ENCODE measurements at regions of chr5 and their contacts with region 1.

Region 1: DNA sequence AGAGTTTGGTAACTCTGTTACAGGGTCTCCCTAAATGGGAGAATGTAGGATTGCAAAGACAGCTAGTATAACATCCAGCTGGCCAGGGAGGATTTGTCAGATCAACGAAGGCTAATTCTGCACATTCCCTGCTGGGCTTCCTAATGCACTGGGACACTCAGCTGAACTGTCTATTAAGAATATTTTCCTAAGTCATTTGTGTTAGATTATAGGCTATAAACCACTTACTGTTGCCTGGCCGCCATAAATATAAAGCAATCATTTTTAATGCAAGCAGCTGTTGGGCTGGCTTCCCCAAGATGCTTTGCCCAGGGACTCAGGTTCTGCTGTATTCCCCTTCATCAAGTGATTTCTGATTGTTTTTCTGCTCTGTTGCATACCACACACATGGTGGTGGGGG is 35.3 kb upstream of the SLIT3 start:
- DNase-seq: no peak
- H3K4me3 ChIP-seq: no peak overlapping the region
- H3K27ac ChIP-seq: no peak overlapping the region
- H3K4me1 ChIP-seq: no peaks in the 10 kb centered on the region
- H3K27me3 ChIP-seq: no peaks in the 10 kb centered on the region
- CTCF ChIP-seq: no peak
- POLR2A ChIP-seq: no peak

Region 2: DNA sequence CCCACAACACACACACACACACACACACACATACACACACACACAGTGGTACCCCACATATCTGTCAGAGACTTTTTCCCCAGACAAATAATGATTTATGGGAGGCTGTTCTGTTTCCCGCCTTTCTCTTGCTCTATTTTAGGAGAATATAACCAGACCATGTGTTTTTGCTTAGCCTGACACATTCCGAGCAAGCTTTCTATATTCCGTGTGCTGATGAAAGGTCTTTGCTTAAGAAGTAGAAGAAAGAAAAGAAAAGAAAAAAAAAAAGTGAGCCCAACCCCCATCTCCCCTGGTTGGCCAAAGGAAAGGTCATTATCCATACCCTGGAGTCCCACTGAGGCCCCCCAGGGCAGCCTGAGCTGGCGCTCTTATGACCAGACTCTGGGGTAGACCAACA is 373.9 kb before region 1 on chr5:
- intact Hi-C with region 1: no loop called
- DNase-seq: no peak
- H3K4me3 ChIP-seq: no peak overlapping the region
- H3K27ac ChIP-seq: peak overlapping the region in 1 of 2 donors; percentile 55
- H3K4me1 ChIP-seq: no peaks in the 10 kb centered on the region
- H3K27me3 ChIP-seq: no peaks in the 10 kb centered on the region
- CTCF ChIP-seq: no peak
- POLR2A ChIP-seq: no peak

Region 3: GRCh38 chr5:169280286-169280685 is 56.0 kb before region 1 on chr5:
- intact Hi-C with region 1: no loop called
- DNase-seq: no peak
- H3K4me3 ChIP-seq: no peak overlapping the region
- H3K27ac ChIP-seq: no peak overlapping the region
- H3K4me1 ChIP-seq: no peaks in the 10 kb centered on the region
- H3K27me3 ChIP-seq: no peaks in the 10 kb centered on the region
- CTCF ChIP-seq: no peak
- POLR2A ChIP-seq: no peak

Region 4: GRCh38 chr5:169367861-169368260 is 31.6 kb after region 1 on chr5:
- intact Hi-C with region 1: no loop called
- DNase-seq: no peak
- H3K4me3 ChIP-seq: no peak overlapping the region
- H3K27ac ChIP-seq: no peak overlapping the region
- H3K4me1 ChIP-seq: no peaks in the 10 kb centered on the region
- H3K27me3 ChIP-seq: no peaks in the 10 kb centered on the region
- CTCF ChIP-seq: no peak
- POLR2A ChIP-seq: no peak

Region 5: GRCh38 chr5:169411786-169412430 is 75.7 kb after region 1 on chr5:
- intact Hi-C with region 1: loop called (anchors 2 kb)
- DNase-seq: no peak
- H3K4me3 ChIP-seq: no peak overlapping the region
- H3K27ac ChIP-seq: no peak overlapping the region
- H3K4me1 ChIP-seq: no peaks in the 10 kb centered on the region
- H3K27me3 ChIP-seq: no peaks in the 10 kb centered on the region
- CTCF ChIP-seq: no peak
- POLR2A ChIP-seq: no peak

Region 6: GRCh38 chr5:169838688-169839087 is 502.4 kb after region 1 on chr5:
- intact Hi-C with region 1: no loop called
- DNase-seq: no peak
- H3K4me3 ChIP-seq: no peak overlapping the region
- H3K27ac ChIP-seq: no peak overlapping the region
- H3K4me1 ChIP-seq: no peaks in the 10 kb centered on the region
- H3K27me3 ChIP-seq: no peaks in the 10 kb centered on the region
- CTCF ChIP-seq: no peak
- POLR2A ChIP-seq: no peak

Measured in breast epithelium (tissue), 4 donors.